MCF 10A (cell line): ENCODE measurements at regions of chr1 and their contacts with region 1.

Region 1: GRCh38 chr1:192808518-192809306 is at the start of gene RGS2:
- DNase-seq: peak; percentile 95
- H3K4me3 Mint-ChIP-seq: peak within 1 kb of the TSS; percentile 97
- H3K27ac Mint-ChIP-seq: peak within 1 kb of the TSS; percentile 90
- H3K4me1 Mint-ChIP-seq: peaks cover 28% of the 10 kb centered on the region
- H3K27me3 Mint-ChIP-seq: no peaks in the 10 kb centered on the region
- CTCF ChIP-seq: no peak
- total RNA-seq, gene RGS2: 31.5 and 42.6 TPM in 2 replicates

Region 2: GRCh38 chr1:192787914-192788585 is 20.7 kb before region 1 on chr1:
- CTCF ChIA-PET with region 1: interaction called, 17 read pairs
- POLR2A ChIA-PET with region 1: interaction called, 5 read pairs
- intact Hi-C with region 1: no loop called
- DNase-seq: peak; percentile 51
- H3K4me3 Mint-ChIP-seq: no peak overlapping the region
- H3K27ac Mint-ChIP-seq: peak overlapping the region; percentile 32
- H3K4me1 Mint-ChIP-seq: no peaks in the 10 kb centered on the region
- H3K27me3 Mint-ChIP-seq: no peaks in the 10 kb centered on the region
- CTCF ChIP-seq: no peak

Region 3: GRCh38 chr1:192860478-192861185 is 51.9 kb after region 1 on chr1:
- CTCF ChIA-PET with region 1: interaction called, 6 read pairs
- POLR2A ChIA-PET with region 1: interaction called, 33 read pairs
- intact Hi-C with region 1: no loop called
- DNase-seq: no peak
- H3K4me3 Mint-ChIP-seq: no peak overlapping the region
- H3K27ac Mint-ChIP-seq: no peak overlapping the region
- H3K4me1 Mint-ChIP-seq: peaks cover 12% of the 10 kb centered on the region
- H3K27me3 Mint-ChIP-seq: no peaks in the 10 kb centered on the region
- CTCF ChIP-seq: no peak

Region 4: DNA sequence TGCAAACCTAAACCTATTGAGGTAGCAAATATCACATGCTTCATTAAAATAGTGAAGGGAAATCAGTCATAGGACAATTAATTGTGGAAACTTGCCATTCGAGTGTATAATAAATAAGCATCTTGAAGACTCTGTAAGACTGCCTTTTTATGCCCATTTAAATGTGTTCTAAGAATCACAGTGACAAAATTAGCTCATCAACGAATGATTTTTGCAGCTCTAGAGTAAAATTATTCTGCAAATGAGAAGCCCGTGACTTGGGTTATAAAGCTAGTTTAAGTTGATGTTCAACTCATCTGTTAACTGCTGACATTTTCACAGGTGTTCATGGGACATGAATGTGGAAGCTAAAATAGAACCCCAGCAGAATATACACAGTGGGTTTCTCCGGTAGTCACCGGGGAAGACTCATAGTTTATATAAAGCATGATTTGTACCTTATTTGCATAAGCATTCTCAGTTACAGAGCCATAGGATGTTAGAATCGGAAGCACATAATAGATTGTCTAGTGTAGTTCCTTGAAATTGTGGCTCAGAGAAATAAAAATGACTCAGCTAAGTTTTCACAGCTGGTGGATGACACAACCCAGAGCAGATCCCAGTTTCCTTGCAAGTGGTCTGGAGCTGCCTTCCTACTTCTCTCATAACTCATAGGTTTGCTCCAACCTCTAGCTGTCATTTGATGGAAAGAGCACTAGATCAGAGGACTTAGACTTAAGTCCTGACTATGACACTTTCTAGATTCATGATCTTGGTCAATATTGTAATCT is 143.2 kb after region 1 on chr1:
- CTCF ChIA-PET with region 1: interaction called, 5 read pairs
- POLR2A ChIA-PET with region 1: interaction called, 25 read pairs
- intact Hi-C with region 1: loop called (anchors 1 kb)
- DNase-seq: peak; percentile 85
- H3K4me3 Mint-ChIP-seq: no peak overlapping the region
- H3K27ac Mint-ChIP-seq: peak overlapping the region; percentile 56
- H3K4me1 Mint-ChIP-seq: peaks cover 14% of the 10 kb centered on the region
- H3K27me3 Mint-ChIP-seq: no peaks in the 10 kb centered on the region
- CTCF ChIP-seq: no peak

Region 5: DNA sequence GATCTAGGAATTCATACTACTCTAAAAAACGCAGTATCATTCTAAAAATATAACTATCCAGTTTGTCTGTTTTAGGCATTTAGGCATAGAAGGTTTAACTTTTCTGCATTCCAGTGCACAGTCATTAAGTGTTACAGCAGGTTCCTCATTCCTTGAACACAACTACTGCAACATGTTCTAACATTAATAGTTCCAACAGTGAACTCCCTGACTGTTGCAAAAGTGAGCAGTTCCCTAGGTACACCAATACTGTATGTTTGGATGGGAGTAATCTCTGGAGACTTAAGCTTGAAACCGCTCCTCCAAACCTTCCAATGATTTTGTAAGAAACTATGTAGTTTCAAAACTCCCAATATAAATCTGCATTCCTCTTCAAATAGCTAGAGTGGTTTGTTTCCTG is 204.3 kb after region 1 on chr1:
- CTCF ChIA-PET with region 1: interaction called, 226 read pairs
- POLR2A ChIA-PET with region 1: interaction called, 204 read pairs
- intact Hi-C with region 1: no loop called
- DNase-seq: no peak
- H3K4me3 Mint-ChIP-seq: no peak overlapping the region
- H3K27ac Mint-ChIP-seq: peak overlapping the region; percentile 16
- H3K4me1 Mint-ChIP-seq: no peaks in the 10 kb centered on the region
- H3K27me3 Mint-ChIP-seq: no peaks in the 10 kb centered on the region
- CTCF ChIP-seq: no peak

Region 6: DNA sequence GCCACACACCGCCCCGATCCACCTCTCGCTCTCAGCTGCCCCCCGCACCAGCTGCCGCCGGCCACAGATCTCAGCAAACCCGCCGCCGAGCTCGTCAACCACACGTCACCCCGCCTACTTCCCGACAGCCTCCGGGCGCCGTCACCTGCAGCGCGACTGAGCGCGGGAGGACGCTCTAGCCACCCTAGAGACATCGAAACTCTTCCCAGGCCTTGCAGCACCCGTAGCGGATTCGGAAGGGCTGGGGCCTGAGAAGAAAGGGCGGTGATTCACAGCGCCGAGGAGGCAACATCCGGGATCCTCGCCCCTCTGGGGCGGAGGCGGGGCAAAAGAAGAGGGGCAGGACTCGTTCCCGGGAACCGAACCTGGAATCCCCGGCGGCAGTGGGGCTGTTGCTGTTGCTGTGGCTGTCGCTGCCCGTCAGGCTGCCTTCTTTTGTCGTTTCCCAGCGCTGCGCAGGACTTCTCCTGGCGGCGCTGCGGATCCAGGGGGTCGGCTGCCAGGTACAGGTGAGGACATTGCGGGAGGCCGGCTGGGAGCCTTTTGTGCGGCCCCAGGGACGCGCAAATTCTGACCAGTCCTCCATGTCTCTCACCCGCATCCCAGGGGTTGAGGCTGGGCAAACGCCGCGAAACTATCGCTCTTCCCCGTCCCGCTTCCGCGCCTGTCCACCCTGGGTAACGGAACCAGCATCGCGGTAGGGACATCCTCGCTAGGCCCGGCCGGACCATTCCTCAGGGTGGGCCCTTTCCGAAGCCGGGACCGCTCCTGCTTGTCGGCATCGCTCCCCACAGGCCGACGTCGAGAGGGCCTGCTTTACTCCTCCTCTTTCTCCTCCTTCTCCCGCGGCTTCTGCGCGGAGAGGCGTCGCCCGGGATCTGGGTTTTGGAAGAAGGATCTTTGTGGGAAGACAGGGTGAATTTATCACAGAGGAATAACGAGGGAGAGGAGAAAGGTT is 250.8 kb after region 1 on chr1 and contains the starts of genes RO60 and UCHL5:
- CTCF ChIA-PET with region 1: interaction called, 21 read pairs
- POLR2A ChIA-PET with region 1: interaction called, 49 read pairs
- intact Hi-C with region 1: loop called (anchors 1 kb)
- DNase-seq: peak; percentile 100
- H3K4me3 Mint-ChIP-seq: peak within 1 kb of the TSS; percentile 87
- H3K27ac Mint-ChIP-seq: peak within 1 kb of the TSS; percentile 97
- H3K4me1 Mint-ChIP-seq: peaks cover 38% of the 10 kb centered on the region
- H3K27me3 Mint-ChIP-seq: no peaks in the 10 kb centered on the region
- CTCF ChIP-seq: no peak
- total RNA-seq, gene RO60: 128 and 135 TPM in 2 replicates
- total RNA-seq, gene UCHL5: 79.2 and 94.4 TPM in 2 replicates